ENCODE measurements at regions of chr22 and their contacts with region 1.

Region 1: GRCh38 chr22:25702040-25702439 is 39.9 kb upstream of the MYO18B start:
- DNase-seq: no peak
- H3K4me3 ChIP-seq: no peak overlapping the region
- H3K27ac ChIP-seq: no peak overlapping the region
- H3K4me1 ChIP-seq: no peaks in the 10 kb centered on the region
- H3K27me3 ChIP-seq: no peaks in the 10 kb centered on the region
- CTCF ChIP-seq: peak in 2 of 3 donors; percentile 20 to 34
- EP300 ChIP-seq: no peak
- POLR2A ChIP-seq: no peak

Region 2: DNA sequence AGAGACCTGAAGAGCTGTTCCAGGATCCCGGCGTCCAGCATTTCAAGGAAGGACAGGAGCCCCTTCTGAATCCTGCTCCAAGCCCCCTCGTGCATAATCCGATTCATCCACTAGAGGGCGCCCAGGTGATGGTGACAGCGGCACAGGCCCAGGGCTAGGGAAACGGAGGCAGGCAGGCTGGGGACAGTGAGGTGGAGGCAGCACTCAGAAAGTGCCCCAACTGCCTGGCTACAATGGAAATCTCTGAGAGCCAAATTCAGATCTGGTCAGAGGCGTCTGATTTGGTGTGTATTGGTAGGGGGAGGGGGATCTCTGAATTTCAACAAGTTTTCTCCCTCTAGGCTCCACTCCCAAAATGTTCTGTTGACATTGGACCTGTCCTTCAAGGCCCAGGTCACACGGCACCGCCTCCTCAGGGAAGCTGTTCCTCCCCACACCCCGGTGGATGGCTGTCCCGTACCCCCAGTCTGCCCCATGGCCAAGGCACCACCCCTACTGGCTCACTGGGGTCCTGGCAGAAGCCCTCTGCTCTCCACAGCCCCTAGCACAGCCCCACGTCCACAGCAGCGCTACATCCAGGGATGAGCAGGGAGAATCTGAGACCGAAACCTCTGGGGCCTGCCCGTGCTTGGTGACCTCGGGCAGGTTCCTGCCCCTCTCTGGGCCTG is 339.7 kb before region 1 on chr22:
- intact Hi-C with region 1: loop called in 1 of 4 experiments (anchors 10 kb)
- DNase-seq: peak; percentile 49 to 75 (median 70)
- H3K4me3 ChIP-seq: no peak overlapping the region
- H3K27ac ChIP-seq: no peak overlapping the region
- H3K4me1 ChIP-seq: peaks cover 17% of the 10 kb centered on the region
- H3K27me3 ChIP-seq: no peaks in the 10 kb centered on the region
- CTCF ChIP-seq: peak; percentile 57 to 79 (median 68)
- EP300 ChIP-seq: no peak
- POLR2A ChIP-seq: no peak

Region 3: DNA sequence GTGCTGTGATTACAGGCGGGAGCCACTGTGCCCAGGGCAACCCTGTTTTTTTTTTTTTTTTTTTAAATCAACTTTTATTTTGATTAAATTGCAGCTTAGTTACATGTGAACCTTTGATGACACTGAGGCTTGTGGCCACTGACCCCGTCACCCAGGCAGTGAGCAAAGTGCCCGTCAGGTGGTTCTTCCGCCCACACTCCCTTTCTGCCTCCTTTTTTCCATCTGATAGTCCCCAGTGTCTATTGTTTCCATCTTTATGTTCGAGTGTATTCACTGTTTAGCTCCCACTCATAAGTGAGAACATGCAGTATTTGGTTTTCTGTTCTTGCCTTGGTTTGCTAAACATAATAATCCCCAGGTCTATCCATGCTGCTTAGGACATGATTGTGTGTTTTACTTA is 248.5 kb before region 1 on chr22:
- intact Hi-C with region 1: no loop called
- DNase-seq: no peak
- H3K4me3 ChIP-seq: no peak overlapping the region
- H3K27ac ChIP-seq: no peak overlapping the region
- H3K4me1 ChIP-seq: peaks cover 8% of the 10 kb centered on the region
- H3K27me3 ChIP-seq: no peaks in the 10 kb centered on the region
- CTCF ChIP-seq: no peak
- EP300 ChIP-seq: no peak
- POLR2A ChIP-seq: no peak

Region 4: DNA sequence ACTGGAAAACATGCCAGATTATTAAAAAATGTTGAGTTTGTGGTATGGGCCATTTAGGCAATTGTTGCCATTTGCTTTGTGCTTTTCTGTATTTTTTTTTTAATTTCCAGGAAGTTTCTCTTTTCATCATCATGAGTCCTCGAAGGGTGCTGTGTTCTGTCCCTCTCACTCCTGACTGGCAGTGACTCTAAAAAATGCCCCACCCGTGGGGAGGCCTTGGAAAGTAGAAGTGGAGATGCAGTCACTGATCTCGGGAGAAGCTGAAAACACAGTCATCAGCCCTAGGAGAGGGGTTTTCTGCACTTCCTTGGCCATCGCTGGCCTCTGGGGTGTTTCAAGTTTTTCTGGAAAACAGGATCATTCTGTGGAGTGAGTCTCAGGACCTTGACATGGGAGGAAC is 236.1 kb before region 1 on chr22:
- intact Hi-C with region 1: loop called (anchors 2 to 5 kb)
- DNase-seq: no peak
- H3K4me3 ChIP-seq: no peak overlapping the region
- H3K27ac ChIP-seq: no peak overlapping the region
- H3K4me1 ChIP-seq: no peaks in the 10 kb centered on the region
- H3K27me3 ChIP-seq: no peaks in the 10 kb centered on the region
- CTCF ChIP-seq: no peak
- EP300 ChIP-seq: no peak
- POLR2A ChIP-seq: no peak

Region 5: GRCh38 chr22:25598609-25599008 is 103.4 kb before region 1 on chr22:
- intact Hi-C with region 1: no loop called
- DNase-seq: no peak
- H3K4me3 ChIP-seq: no peak overlapping the region
- H3K27ac ChIP-seq: no peak overlapping the region
- H3K4me1 ChIP-seq: no peaks in the 10 kb centered on the region
- H3K27me3 ChIP-seq: no peaks in the 10 kb centered on the region
- CTCF ChIP-seq: no peak
- EP300 ChIP-seq: no peak
- POLR2A ChIP-seq: no peak

Region 6: GRCh38 chr22:25668437-25668836 is 33.6 kb before region 1 on chr22:
- intact Hi-C with region 1: loop called in 1 of 4 experiments (anchors 1 kb)
- DNase-seq: peak; percentile 53 to 72 (median 68)
- H3K4me3 ChIP-seq: no peak overlapping the region
- H3K27ac ChIP-seq: no peak overlapping the region
- H3K4me1 ChIP-seq: peaks cover 7% of the 10 kb centered on the region
- H3K27me3 ChIP-seq: no peaks in the 10 kb centered on the region
- CTCF ChIP-seq: no peak
- EP300 ChIP-seq: no peak
- POLR2A ChIP-seq: no peak